PC-3 (cell line): ENCODE measurements at regions of chr3 and their contacts with region 1.

Region 1: GRCh38 chr3:51682079-51682478 is 11.0 kb downstream of the TEX264 start:
- DNase-seq: peak; percentile 93
- ATAC-seq: peak; percentile 84
- H3K4me3 ChIP-seq: no peak overlapping the region
- H3K27ac ChIP-seq: no peak overlapping the region
- H3K4me1 ChIP-seq: peaks cover 24% of the 10 kb centered on the region
- H3K27me3 ChIP-seq: no peaks in the 10 kb centered on the region
- CTCF ChIP-seq: peak; percentile 89

Region 2: DNA sequence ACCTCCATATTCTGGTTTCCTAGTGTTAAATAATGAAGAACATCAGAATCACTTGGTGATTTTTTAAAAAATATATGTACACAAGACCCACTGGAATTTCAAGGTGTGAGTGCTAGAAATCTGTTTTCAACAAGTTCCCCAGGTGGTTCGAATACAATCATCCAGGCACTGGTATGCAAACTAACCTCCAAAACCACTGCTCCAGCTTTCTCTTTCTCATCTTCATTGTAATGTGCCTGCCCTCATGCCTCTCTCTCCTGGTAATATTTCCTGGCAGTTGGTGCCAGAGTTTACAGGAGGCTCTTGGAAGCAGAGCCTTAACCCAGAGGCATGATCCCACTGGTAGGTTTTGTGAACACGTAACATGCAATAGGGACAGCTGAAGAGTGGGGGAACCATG is 460.1 kb before region 1 on chr3:
- CTCF ChIA-PET with region 1: no interaction called
- POLR2A ChIA-PET with region 1: no interaction called
- intact Hi-C with region 1: no loop called
- DNase-seq: no peak
- ATAC-seq: no peak
- H3K4me3 ChIP-seq: no peak overlapping the region
- H3K27ac ChIP-seq: no peak overlapping the region
- H3K4me1 ChIP-seq: no peaks in the 10 kb centered on the region
- H3K27me3 ChIP-seq: peaks cover 45% of the 10 kb centered on the region
- CTCF ChIP-seq: no peak

Region 3: GRCh38 chr3:51637941-51638471 is 44.1 kb before region 1 on chr3:
- CTCF ChIA-PET with region 1: interaction called, 4 read pairs
- POLR2A ChIA-PET with region 1: no interaction called
- intact Hi-C with region 1: loop called (anchors 1 kb)
- DNase-seq: peak; percentile 76
- ATAC-seq: peak; percentile 91
- H3K4me3 ChIP-seq: peak overlapping the region; percentile 28; the same call in 1 of the 2 replicates
- H3K27ac ChIP-seq: peak overlapping the region; percentile 44
- H3K4me1 ChIP-seq: peaks cover 10% of the 10 kb centered on the region
- H3K27me3 ChIP-seq: no peaks in the 10 kb centered on the region
- CTCF ChIP-seq: peak; percentile 99

Region 4: DNA sequence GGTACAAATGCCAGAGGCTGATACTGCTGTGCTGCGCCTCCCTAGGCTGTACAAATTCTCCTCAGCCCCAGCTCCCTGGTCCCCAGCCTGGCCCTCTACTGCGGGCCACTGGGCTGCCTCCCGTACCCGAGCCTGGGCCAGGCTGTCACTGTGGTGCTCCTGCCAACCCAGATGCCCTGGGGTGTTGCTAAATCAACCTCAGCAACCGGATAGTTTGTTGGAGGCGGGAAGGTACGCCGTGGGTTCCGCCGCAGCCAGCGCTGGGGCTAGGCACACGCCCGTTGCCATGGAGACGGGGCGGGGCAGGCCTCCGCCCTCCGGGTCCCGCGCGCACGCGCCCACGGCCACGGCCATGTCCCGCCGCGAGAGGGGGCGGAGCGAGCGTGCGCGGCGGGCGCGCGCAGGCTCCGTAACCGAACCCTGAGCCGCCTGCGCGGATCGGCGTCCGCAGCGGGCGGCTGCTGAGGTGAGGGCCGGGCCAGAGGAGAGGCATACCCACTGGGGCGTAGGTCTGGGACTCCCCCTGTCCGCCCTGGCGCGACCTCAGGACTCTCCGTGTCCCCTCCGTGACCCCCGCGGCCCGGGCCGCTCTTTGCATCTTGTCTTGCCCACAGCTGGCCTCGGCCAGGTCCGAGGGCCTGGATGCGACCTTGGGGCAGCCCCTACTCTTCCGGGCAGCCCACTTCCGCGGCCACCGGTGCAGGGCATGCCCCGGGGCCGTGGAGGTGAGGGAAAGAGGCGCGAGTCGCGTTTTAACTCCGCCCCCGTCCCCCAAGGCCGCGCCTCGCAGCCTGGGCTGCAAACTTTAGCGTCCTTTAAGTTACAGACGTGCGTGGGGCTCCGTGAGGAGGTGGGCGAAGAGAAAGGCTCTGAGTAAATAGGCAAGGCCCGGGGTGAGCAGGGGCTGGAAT is 11.0 kb before region 1 on chr3 and contains the start of gene TEX264:
- CTCF ChIA-PET with region 1: interaction called, 29 read pairs
- POLR2A ChIA-PET with region 1: no interaction called
- intact Hi-C with region 1: loop called (anchors 1 kb)
- DNase-seq: peak; percentile 95
- ATAC-seq: peak; percentile 67
- H3K4me3 ChIP-seq: peak within 1 kb of the TSS; percentile 91
- H3K27ac ChIP-seq: peak within 1 kb of the TSS; percentile 64
- H3K4me1 ChIP-seq: peaks cover 57% of the 10 kb centered on the region
- H3K27me3 ChIP-seq: no peaks in the 10 kb centered on the region
- CTCF ChIP-seq: no peak
- total RNA-seq, gene TEX264: 85.5 and 88.1 TPM in 2 replicates

Region 5: DNA sequence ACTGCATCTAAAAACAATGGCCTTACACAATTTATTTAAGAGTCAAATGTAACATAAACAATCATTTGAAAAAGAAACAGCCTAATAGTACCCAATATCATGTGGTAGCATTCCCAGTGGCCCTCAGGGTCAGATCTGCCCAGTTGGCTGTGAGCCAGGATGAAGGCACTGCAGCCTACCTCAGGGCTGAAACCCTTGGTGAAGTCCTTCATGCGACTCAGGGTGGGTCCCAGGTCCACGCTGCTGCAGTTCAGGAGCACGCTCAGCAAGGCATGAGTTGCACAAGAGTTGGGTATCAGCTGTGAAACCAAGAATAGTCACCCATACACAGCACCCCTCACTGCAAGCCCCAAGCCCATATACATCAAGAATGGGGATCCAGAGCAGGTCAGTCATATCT is 725.7 kb after region 1 on chr3:
- CTCF ChIA-PET with region 1: interaction called, 10 read pairs
- POLR2A ChIA-PET with region 1: no interaction called
- intact Hi-C with region 1: no loop called
- DNase-seq: no peak
- ATAC-seq: no peak
- H3K4me3 ChIP-seq: no peak overlapping the region
- H3K27ac ChIP-seq: no peak overlapping the region
- H3K4me1 ChIP-seq: peaks cover 26% of the 10 kb centered on the region
- H3K27me3 ChIP-seq: no peaks in the 10 kb centered on the region
- CTCF ChIP-seq: no peak

Region 6: DNA sequence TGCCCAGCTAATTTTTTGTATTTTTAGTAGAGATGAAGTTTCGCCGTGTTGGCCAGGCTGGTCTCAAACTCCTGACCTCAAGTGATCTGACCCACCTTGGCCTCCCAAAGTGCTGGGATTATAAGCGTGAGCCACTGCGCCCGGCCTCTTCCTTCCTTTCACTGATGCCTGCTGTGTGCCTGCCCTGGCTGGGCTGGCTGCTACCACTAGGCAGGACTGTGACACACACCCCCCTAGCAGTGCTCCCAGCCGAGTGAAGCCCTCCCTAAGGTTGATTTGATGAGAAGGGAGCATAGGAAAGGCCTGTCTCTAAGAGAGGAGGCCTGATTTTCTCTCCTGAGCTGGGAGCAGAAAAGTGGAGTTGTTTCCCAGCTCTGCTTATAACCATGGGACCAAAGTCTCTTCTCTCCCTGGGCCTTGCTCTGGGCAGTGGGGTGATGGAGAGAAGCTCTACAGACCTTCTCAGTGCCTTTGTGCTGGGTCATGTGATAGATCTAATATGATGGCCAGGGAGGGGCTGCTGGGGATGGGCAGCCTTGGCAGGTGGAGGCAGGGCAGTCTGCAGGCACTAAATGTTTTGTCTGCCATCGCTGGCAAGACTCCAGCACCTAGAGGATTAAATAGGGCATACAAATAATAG is 1383.9 kb after region 1 on chr3:
- CTCF ChIA-PET with region 1: no interaction called
- POLR2A ChIA-PET with region 1: interaction called, 13 read pairs
- intact Hi-C with region 1: no loop called
- DNase-seq: no peak
- ATAC-seq: no peak
- H3K4me3 ChIP-seq: no peak overlapping the region
- H3K27ac ChIP-seq: no peak overlapping the region
- H3K4me1 ChIP-seq: no peaks in the 10 kb centered on the region
- H3K27me3 ChIP-seq: no peaks in the 10 kb centered on the region
- CTCF ChIP-seq: no peak